Stomach (tissue), 19 donors: ENCODE measurements at regions of chr7 and their contacts with region 1.

Region 1: GRCh38 chr7:141014524-141015395 is at the start of gene MRPS33:
- DNase-seq: peak; percentile 94 to 99
- H3K4me3 ChIP-seq: peak within 1 kb of the TSS; percentile 56 to 79 (median 62)
- H3K27ac ChIP-seq: peak within 1 kb of the TSS; percentile 85 to 95 (median 90)
- H3K4me1 ChIP-seq: peaks cover 6 to 28% (median 16%) of the 10 kb centered on the region in 4 donors
- H3K27me3 ChIP-seq: no peaks in the 10 kb centered on the region
- CTCF ChIP-seq: peak in 1 of 7 experiments; percentile 51
- EP300 ChIP-seq: no peak
- POLR2A ChIP-seq: no peak
- total RNA-seq, gene MRPS33: 0.89 to 51.3 (median 8.5) TPM in 4 of 5 donors, not detected in the other

Region 2: GRCh38 chr7:140810830-140811556 is 203.8 kb before region 1 on chr7:
- intact Hi-C with region 1: loop called (anchors 5 kb)
- DNase-seq: peak; percentile 59 to 88
- H3K4me3 ChIP-seq: no peak overlapping the region
- H3K27ac ChIP-seq: no peak overlapping the region
- H3K4me1 ChIP-seq: peaks cover 0 to 5% (median 0%) of the 10 kb centered on the region in 4 donors
- H3K27me3 ChIP-seq: no peaks in the 10 kb centered on the region
- CTCF ChIP-seq: peak in 6 of 7 experiments; percentile 47 to 87 (median 72)
- EP300 ChIP-seq: no peak
- POLR2A ChIP-seq: no peak

Region 3: DNA sequence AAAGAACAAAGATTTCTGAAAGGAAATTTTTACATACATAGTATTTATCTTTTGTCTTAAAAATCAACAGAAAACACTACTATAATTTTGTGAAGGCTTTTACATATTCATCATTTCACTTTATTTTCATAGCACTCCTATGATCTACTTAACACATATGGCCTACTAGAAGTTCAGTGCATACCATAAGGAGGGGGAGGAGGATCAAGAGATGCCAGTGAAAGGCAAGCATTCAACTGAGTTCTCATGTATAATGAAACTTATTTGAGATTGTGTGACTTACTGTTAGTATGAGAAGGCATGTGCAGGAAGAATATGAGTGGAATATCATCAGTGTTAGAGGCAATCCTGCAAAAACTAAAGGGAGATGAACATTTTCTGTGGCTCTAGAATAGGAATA is 100.7 kb before region 1 on chr7:
- intact Hi-C with region 1: no loop called
- DNase-seq: no peak
- H3K4me3 ChIP-seq: no peak overlapping the region
- H3K27ac ChIP-seq: no peak overlapping the region
- H3K4me1 ChIP-seq: peaks cover 13 to 44% (median 29%) of the 10 kb centered on the region in 4 donors
- H3K27me3 ChIP-seq: no peaks in the 10 kb centered on the region
- CTCF ChIP-seq: no peak
- EP300 ChIP-seq: no peak
- POLR2A ChIP-seq: no peak

Region 4: DNA sequence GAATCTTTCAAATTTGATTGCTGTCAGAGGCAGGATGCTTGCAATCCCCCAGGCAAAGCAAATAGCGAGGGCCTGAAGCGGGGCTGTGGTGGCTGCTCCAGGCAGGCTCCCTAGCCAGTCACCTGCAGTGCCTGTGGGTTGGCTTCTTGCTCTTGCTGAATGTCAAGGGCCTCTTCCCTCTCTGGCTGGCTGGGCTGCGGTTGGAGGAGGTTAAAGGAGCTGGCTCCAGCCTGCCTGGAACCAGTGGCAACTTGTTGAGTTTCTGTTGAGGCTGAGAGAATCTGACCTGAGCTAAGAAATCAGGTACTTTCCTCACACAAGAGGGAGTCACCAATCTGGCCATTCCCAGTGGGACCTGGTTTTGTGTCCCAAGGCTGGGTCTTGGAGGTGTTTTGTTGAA is 193.8 kb after region 1 on chr7:
- intact Hi-C with region 1: no loop called
- DNase-seq: no peak
- H3K4me3 ChIP-seq: no peak overlapping the region
- H3K27ac ChIP-seq: no peak overlapping the region
- H3K4me1 ChIP-seq: no peaks in the 10 kb centered on the region
- H3K27me3 ChIP-seq: no peaks in the 10 kb centered on the region
- CTCF ChIP-seq: no peak
- EP300 ChIP-seq: no peak
- POLR2A ChIP-seq: no peak